Activated CD4-positive, alpha-beta T cell treated with anti-CD3 and anti-CD28 coated beads, Interleukin-2, amount 10 ng/mL, durations not matched to agents 24 days and 14 days (primary cell): ENCODE measurements at regions of chr12 and their contacts with region 1.

Region 1: GRCh38 chr12:122265931-122266771 is at the start of gene VPS33A:
- DNase-seq: peak; percentile 99
- H3K4me3 Mint-ChIP-seq: peak within 1 kb of the TSS; percentile 95
- H3K27ac Mint-ChIP-seq: peak within 1 kb of the TSS; percentile 99
- H3K4me1 Mint-ChIP-seq: peaks cover 18% of the 10 kb centered on the region
- H3K27me3 Mint-ChIP-seq: peaks cover 2% of the 10 kb centered on the region
- total RNA-seq, gene VPS33A: 25.9 and 28.4 TPM in 2 replicates

Region 2: GRCh38 chr12:122130150-122130549 is 136.0 kb before region 1 on chr12:
- intact Hi-C with region 1: loop called (anchors 5 kb)
- DNase-seq: no peak
- H3K4me3 Mint-ChIP-seq: no peak overlapping the region
- H3K27ac Mint-ChIP-seq: no peak overlapping the region
- H3K4me1 Mint-ChIP-seq: peaks cover 4% of the 10 kb centered on the region
- H3K27me3 Mint-ChIP-seq: no peaks in the 10 kb centered on the region

Region 3: DNA sequence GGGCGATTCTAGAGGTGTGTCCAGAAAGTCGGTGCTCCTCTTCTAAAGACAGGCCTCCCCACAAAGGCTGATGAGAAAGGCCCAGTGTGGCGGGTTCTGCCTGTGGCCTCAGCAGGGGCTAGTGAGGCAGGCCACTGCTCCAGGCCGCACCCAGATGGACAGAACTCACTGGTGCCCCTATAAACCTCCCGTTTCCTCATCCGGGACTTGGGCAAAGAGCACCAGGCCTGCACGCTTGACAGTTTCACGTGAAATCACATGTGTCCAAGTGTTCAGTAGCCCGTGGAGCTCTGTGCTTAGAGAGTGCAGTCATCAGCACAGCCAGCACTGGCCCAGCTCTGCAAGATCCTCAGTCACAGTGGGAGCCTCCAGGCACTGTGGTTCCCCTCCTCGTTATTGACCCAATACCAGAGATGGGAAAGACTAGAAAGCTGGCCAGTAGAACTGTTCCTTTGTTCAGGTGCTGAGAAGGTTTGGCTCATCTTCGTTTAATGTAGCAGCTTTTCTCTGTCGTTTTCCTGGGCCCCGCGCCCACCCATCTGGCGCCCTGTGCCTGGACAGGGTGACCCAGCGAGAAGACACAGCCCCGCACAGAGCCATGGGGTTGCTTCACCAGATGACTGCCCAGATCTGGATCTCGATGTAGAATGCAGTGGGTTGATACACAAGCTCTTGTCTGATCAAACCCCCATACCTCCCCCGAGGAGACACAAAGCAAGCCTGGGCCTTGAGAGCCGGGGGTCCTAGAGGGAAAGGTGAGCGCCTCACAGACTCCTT is 118.4 kb before region 1 on chr12:
- intact Hi-C with region 1: no loop called
- DNase-seq: no peak
- H3K4me3 Mint-ChIP-seq: no peak overlapping the region
- H3K27ac Mint-ChIP-seq: no peak overlapping the region
- H3K4me1 Mint-ChIP-seq: no peaks in the 10 kb centered on the region
- H3K27me3 Mint-ChIP-seq: peaks cover 8% of the 10 kb centered on the region

Region 4: GRCh38 chr12:122225683-122226407 is 40.3 kb before region 1 on chr12 and contains the start of gene DIABLO:
- intact Hi-C with region 1: loop called (anchors 1 kb)
- DNase-seq: peak; percentile 100
- H3K4me3 Mint-ChIP-seq: peak within 1 kb of the TSS; percentile 95
- H3K27ac Mint-ChIP-seq: peak within 1 kb of the TSS; percentile 94
- H3K4me1 Mint-ChIP-seq: peaks cover 31% of the 10 kb centered on the region
- H3K27me3 Mint-ChIP-seq: no peaks in the 10 kb centered on the region
- total RNA-seq, gene DIABLO: 59.4 and 61.0 TPM in 2 replicates

Region 5: DNA sequence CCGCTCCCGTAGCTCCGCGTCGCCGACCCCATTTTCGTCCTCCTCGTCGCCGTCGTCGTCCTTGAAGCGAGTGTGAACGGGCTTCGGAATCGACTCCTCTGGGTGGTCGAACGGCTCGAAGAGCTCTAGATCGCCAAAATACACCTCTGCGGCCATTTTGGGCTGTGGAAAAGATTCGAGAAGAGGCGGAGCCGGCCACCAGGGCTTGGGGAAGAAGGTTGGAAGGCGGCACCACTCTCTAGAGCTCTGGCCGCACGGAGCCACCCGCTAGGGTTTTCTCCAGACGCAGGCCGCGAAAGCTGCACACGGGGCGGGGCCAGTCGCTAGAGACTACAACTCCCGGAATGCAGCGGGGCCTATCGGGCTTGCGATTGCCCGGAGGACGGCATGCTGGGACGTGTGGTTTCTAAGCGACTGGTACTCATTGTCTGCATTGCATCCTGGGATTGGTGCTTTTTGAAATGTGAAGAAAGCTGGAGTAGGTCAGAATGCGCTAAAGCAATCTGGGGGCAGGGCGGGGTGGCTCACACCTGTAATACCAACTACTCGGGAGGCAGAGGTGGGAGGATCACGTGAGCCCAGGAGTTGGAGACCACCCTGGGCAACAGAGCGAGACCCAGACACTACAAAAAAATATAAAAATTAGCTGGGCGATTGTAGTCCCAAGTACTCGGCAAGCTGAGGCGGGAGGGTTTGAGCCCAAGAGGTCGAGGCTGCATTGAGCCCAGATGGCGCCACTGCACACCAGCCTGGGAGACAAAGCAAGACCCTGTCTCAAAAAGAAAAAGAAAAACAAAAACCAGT is 234.7 kb after region 1 on chr12 and contains the start of gene ZCCHC8:
- intact Hi-C with region 1: loop called (anchors 2 kb)
- DNase-seq: peak; percentile 99
- H3K4me3 Mint-ChIP-seq: peak within 1 kb of the TSS; percentile 97
- H3K27ac Mint-ChIP-seq: peak within 1 kb of the TSS; percentile 99
- H3K4me1 Mint-ChIP-seq: peaks cover 29% of the 10 kb centered on the region
- H3K27me3 Mint-ChIP-seq: no peaks in the 10 kb centered on the region
- total RNA-seq, gene ZCCHC8: 41.4 and 41.9 TPM in 2 replicates